ENCODE measurements at regions of chr12 and their contacts with region 1.

Region 1: GRCh38 chr12:12008931-12009611 is 61.7 kb upstream of the BCL2L14 start:
- DNase-seq: peak in 7 of 9 donors; percentile 31 to 67 (median 36)
- ATAC-seq: peak; percentile 67
- H3K4me3 ChIP-seq: peak overlapping the region; percentile 15
- H3K4me3 Mint-ChIP-seq: peak overlapping the region; percentile 74 to 88 (median 82)
- H3K27ac ChIP-seq: peak overlapping the region; percentile 16
- H3K27ac Mint-ChIP-seq: peak overlapping the region; percentile 83 to 96 (median 90)
- H3K4me1 ChIP-seq: peaks cover 44 to 53% of the 10 kb centered on the region in 2 donors
- H3K4me1 Mint-ChIP-seq: peaks cover 53 to 88% (median 81%) of the 10 kb centered on the region in 7 donors
- H3K27me3 ChIP-seq: no peaks in the 10 kb centered on the region
- H3K27me3 Mint-ChIP-seq: peaks cover 0 to 9% (median 0%) of the 10 kb centered on the region in 5 donors

Region 2: DNA sequence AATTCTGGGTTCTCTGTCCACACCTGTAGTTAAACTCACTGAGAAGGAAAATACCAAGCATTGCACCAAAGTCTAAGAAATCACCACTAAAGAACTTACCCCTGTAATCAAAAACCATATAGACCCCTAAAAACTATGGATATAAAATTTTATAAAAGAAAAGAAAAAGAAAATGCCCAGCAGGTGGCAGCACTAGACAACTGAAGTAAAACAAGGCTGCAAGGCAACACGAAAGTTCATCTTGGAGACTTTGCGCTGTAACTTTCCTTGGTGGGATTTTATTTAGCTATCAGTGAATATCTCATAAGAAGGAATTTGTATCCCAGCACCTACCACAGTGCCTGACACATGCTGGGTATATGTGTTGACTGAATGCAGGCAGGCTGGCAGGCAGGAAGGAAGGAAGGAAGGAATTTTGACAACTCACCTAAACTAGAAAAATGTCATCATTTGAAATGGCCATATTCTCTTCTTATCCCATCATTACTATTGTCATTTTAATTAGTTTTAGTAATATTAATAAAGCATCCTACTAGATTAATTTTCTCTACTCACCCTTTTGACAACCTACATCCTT is 427.8 kb before region 1 on chr12:
- CTCF ChIA-PET with region 1: interaction called, 8 read pairs
- POLR2A ChIA-PET with region 1: no interaction called
- intact Hi-C with region 1: loop called in 1 of 2 experiments (anchors 1 kb)
- DNase-seq: peak; percentile 22 to 73 (median 64)
- ATAC-seq: peak; percentile 60
- H3K4me3 ChIP-seq: no peak overlapping the region
- H3K4me3 Mint-ChIP-seq: peak overlapping the region in 1 of 10 donors; percentile 65
- H3K27ac ChIP-seq: no peak overlapping the region
- H3K27ac Mint-ChIP-seq: peak overlapping the region in 2 of 9 donors; percentile 28 to 88
- H3K4me1 ChIP-seq: no peaks in the 10 kb centered on the region
- H3K4me1 Mint-ChIP-seq: peaks cover 0 to 10% (median 4%) of the 10 kb centered on the region in 7 donors
- H3K27me3 ChIP-seq: no peaks in the 10 kb centered on the region
- H3K27me3 Mint-ChIP-seq: peaks cover 0 to 14% (median 0%) of the 10 kb centered on the region in 5 donors

Region 3: DNA sequence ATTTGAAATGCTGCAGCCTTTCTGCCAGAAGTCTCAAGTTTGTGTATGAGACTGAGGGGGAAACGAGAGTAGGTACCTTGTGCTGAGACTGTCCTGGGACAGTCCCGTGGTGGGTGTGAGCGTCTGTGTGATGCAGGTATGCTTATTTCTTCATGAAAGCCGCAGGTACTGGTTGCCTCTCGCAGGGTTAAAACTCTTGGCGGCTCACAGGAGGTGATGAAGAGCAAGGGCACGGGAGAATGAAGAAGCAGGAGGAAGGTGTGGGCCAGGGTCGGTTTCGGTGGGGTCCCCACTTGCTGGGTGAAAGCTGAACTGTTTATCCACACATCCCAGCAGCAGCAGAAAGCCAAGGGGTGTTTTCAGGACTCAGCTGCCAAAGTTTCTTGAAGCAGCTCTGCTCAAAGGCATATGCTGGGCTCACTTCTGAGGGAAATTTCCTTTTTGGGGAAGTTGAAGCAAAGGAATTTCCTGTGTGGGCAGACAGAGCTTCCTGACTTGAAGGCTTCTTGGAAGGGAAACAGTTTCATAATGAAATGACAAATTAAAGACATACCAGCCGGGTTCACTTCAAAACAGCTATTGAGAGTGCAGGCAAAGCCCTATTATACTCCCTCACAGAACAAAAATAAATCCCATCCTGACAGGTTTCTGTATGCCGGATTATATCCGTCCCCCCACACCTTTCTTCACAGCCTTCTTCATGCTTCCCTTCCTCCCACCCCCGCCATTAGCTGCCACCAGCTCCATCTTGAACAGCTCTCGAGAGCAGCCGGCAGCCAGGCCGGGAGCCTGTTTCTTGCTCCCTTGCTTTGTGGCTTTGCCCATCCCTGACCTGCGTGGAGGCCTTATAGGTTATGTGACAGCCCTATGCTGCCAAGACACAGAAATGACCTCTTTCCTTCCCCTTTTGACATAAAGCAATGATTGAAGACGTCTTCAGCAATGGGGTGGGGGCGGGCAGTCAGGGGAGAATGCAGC is 243.0 kb before region 1 on chr12:
- CTCF ChIA-PET with region 1: no interaction called
- POLR2A ChIA-PET with region 1: no interaction called
- intact Hi-C with region 1: loop called in 1 of 2 experiments (anchors 5 kb)
- DNase-seq: peak in 4 of 9 donors; percentile 13 to 69 (median 32)
- ATAC-seq: peak; percentile 77
- H3K4me3 ChIP-seq: peak overlapping the region; percentile 12
- H3K4me3 Mint-ChIP-seq: peak overlapping the region; percentile 51 to 93 (median 70)
- H3K27ac ChIP-seq: peak overlapping the region; percentile 36
- H3K27ac Mint-ChIP-seq: peak overlapping the region; percentile 30 to 87 (median 74)
- H3K4me1 ChIP-seq: peaks cover 24 to 33% of the 10 kb centered on the region in 2 donors
- H3K4me1 Mint-ChIP-seq: peaks cover 57 to 96% (median 81%) of the 10 kb centered on the region in 7 donors
- H3K27me3 ChIP-seq: no peaks in the 10 kb centered on the region
- H3K27me3 Mint-ChIP-seq: no peaks in the 10 kb centered on the region

Region 4: GRCh38 chr12:11891754-11892386 is 117.2 kb before region 1 on chr12:
- CTCF ChIA-PET with region 1: no interaction called
- POLR2A ChIA-PET with region 1: no interaction called
- intact Hi-C with region 1: loop called in 1 of 2 experiments (anchors 5 kb)
- DNase-seq: no peak
- ATAC-seq: no peak
- H3K4me3 ChIP-seq: no peak overlapping the region
- H3K4me3 Mint-ChIP-seq: no peak overlapping the region
- H3K27ac ChIP-seq: no peak overlapping the region
- H3K27ac Mint-ChIP-seq: peak overlapping the region in 3 of 9 donors; percentile 28 to 52 (median 35)
- H3K4me1 ChIP-seq: no peaks in the 10 kb centered on the region
- H3K4me1 Mint-ChIP-seq: peaks cover 10 to 46% (median 19%) of the 10 kb centered on the region in 7 donors
- H3K27me3 ChIP-seq: no peaks in the 10 kb centered on the region
- H3K27me3 Mint-ChIP-seq: no peaks in the 10 kb centered on the region

Region 5: DNA sequence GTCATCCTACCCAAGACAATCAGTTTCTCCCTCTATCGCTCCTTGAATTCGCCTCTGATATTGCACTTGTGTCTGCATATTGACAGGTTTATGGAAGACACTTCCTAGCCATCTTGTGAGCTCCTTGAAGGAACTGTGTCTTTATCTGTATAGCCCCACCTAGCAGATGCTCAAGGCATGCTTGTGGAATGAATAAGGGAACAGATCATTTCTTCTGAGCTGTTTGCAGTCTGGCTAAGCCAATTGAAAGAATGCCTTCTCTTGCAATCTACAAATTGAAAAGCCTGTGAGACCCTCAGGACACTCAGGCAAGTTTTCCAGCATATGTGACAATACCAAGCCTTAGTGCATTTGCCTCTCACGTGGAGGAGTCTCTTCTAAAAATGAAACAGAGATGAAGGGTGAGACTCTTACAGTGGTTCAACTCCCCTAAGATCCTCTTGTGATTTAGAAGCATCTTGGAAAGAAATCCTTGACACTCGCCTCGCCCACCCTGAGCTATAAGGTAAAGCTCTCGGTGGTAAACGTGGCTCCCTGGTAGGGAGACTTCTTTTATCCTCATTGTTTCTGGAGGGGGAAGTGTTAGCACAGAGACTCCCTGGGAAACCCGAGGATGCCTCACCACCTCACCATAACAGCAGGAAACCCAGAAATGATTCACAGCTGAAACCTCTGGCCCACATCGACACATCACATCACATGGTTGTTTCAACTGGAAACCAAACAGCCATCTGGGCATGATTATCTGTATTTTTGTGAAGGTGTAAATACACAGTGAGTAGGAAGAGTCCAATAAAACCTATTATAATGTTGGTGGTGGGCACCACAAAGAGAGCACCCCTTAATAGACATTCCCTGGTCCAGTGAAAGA is 50.6 kb before region 1 on chr12:
- CTCF ChIA-PET with region 1: interaction called, 3 read pairs
- POLR2A ChIA-PET with region 1: no interaction called
- intact Hi-C with region 1: loop called in 1 of 2 experiments (anchors 1 kb)
- DNase-seq: peak in 1 of 9 donors; percentile 65
- ATAC-seq: peak; percentile 34
- H3K4me3 ChIP-seq: no peak overlapping the region
- H3K4me3 Mint-ChIP-seq: peak overlapping the region in 1 of 10 donors; percentile 70
- H3K27ac ChIP-seq: no peak overlapping the region
- H3K27ac Mint-ChIP-seq: peak overlapping the region in 3 of 9 donors; percentile 9 to 93 (median 53)
- H3K4me1 ChIP-seq: peaks cover 0 to 4% of the 10 kb centered on the region in 2 donors
- H3K4me1 Mint-ChIP-seq: peaks cover 15 to 54% (median 20%) of the 10 kb centered on the region in 7 donors
- H3K27me3 ChIP-seq: no peaks in the 10 kb centered on the region
- H3K27me3 Mint-ChIP-seq: peaks cover 0 to 5% (median 0%) of the 10 kb centered on the region in 5 donors

Region 6: GRCh38 chr12:12024911-12025682 is 16.0 kb after region 1 on chr12:
- CTCF ChIA-PET with region 1: interaction called, 4 read pairs
- POLR2A ChIA-PET with region 1: interaction called, 5 read pairs
- intact Hi-C with region 1: loop called (anchors 1 to 2 kb)
- DNase-seq: peak in 6 of 9 donors; percentile 24 to 51 (median 31)
- ATAC-seq: peak; percentile 88
- H3K4me3 ChIP-seq: no peak overlapping the region
- H3K4me3 Mint-ChIP-seq: peak overlapping the region in 9 of 10 donors; percentile 11 to 72 (median 48)
- H3K27ac ChIP-seq: no peak overlapping the region
- H3K27ac Mint-ChIP-seq: peak overlapping the region; percentile 22 to 90 (median 66)
- H3K4me1 ChIP-seq: peaks cover 10 to 17% of the 10 kb centered on the region in 2 donors
- H3K4me1 Mint-ChIP-seq: peaks cover 28 to 55% (median 32%) of the 10 kb centered on the region in 7 donors
- H3K27me3 ChIP-seq: no peaks in the 10 kb centered on the region
- H3K27me3 Mint-ChIP-seq: no peaks in the 10 kb centered on the region

Region 7: GRCh38 chr12:12115514-12115913 is 106.4 kb after region 1 on chr12:
- CTCF ChIA-PET with region 1: no interaction called
- POLR2A ChIA-PET with region 1: no interaction called
- intact Hi-C with region 1: no loop called
- DNase-seq: no peak
- ATAC-seq: no peak
- H3K4me3 ChIP-seq: no peak overlapping the region
- H3K4me3 Mint-ChIP-seq: no peak overlapping the region
- H3K27ac ChIP-seq: no peak overlapping the region
- H3K27ac Mint-ChIP-seq: no peak overlapping the region
- H3K4me1 ChIP-seq: no peaks in the 10 kb centered on the region
- H3K4me1 Mint-ChIP-seq: peaks cover 0 to 4% (median 0%) of the 10 kb centered on the region in 7 donors
- H3K27me3 ChIP-seq: no peaks in the 10 kb centered on the region
- H3K27me3 Mint-ChIP-seq: peaks cover 0 to 2% (median 0%) of the 10 kb centered on the region in 5 donors

Region 8: GRCh38 chr12:12486661-12487240 is 477.7 kb after region 1 on chr12:
- CTCF ChIA-PET with region 1: no interaction called
- POLR2A ChIA-PET with region 1: no interaction called
- intact Hi-C with region 1: loop called in 1 of 2 experiments (anchors 10 kb)
- DNase-seq: no peak
- ATAC-seq: no peak
- H3K4me3 ChIP-seq: no peak overlapping the region
- H3K4me3 Mint-ChIP-seq: no peak overlapping the region
- H3K27ac ChIP-seq: no peak overlapping the region
- H3K27ac Mint-ChIP-seq: peak overlapping the region in 6 of 9 donors; percentile 48 to 83 (median 68)
- H3K4me1 ChIP-seq: peaks cover 15 to 16% of the 10 kb centered on the region in 2 donors
- H3K4me1 Mint-ChIP-seq: peaks cover 12 to 43% (median 37%) of the 10 kb centered on the region in 7 donors
- H3K27me3 ChIP-seq: no peaks in the 10 kb centered on the region
- H3K27me3 Mint-ChIP-seq: no peaks in the 10 kb centered on the region